ENCODE measurements at regions of chr4 and their contacts with region 1.

Region 1: DNA sequence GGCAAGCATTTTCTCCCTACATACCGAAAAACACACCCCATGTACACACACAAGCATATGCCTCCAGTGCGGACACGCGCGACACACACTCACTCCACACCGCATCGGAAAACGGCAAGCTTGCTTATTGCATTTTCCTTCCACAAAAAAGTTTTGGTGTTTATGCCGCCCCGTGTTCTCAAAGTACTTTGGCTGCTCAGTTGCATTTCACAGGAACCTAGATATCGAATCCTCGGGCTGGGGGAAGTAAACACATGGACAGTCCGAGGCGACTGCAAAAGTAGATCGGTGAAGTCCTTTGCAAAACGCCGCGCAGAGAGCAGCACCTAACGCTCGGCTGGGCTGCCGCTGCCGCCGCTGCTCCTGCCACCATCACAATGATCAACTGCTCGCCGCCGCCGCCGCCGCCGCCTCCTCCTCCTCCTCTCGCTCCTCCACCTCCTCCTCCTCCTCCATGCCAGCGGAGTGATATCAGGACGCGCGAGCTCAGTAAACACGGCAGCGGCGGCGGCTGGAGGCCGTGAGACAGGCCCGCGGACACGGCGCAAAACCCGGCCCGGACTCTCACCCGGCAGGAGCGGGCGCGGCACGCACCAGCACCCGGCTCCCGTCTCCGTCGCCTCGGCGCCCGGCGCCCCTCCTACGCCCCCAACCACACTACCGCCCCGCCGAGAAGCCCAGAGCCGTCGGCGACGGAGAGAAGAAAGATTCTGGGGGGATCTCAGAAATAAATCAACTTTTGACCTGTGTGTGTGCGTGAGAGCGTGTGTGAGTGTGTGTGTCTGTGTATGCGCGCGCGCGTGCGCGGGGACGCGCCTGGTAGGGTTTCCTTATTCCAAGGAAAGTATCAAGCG is at the start of gene MAML3:
- DNase-seq: peak; percentile 91
- H3K4me3 ChIP-seq: peak within 1 kb of the TSS; percentile 70
- H3K27ac ChIP-seq: peak within 1 kb of the TSS; percentile 70
- H3K27me3 ChIP-seq: no peaks in the 10 kb centered on the region
- CTCF ChIP-seq: no peak
- polyA plus RNA-seq, gene MAML3: 3.5 and 4.1 TPM in 2 replicates

Region 2: DNA sequence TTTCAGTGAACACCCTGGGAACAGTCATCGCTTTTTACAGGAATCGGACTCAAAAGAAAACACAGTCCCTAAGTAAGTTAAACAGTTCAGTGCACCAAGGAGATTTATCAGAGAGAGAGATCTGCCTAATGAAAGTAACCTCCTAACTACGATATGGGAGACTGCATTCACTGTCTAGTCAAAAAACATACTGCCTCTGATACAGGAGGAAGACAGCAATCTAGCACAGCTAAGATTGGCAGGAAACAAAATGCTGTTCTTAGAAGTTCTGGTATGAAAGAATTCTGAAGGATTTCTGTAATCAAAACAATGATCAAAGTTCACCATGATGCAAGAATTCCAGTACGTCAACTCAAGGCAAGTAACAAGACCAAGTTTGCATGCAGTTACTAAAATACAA is 92.8 kb before region 1 on chr4:
- CTCF ChIA-PET with region 1: no interaction called
- POLR2A ChIA-PET with region 1: interaction called, 14 read pairs
- DNase-seq: no peak
- H3K4me3 ChIP-seq: no peak overlapping the region
- H3K27ac ChIP-seq: peak overlapping the region; percentile 22
- H3K27me3 ChIP-seq: no peaks in the 10 kb centered on the region
- CTCF ChIP-seq: no peak

Region 3: DNA sequence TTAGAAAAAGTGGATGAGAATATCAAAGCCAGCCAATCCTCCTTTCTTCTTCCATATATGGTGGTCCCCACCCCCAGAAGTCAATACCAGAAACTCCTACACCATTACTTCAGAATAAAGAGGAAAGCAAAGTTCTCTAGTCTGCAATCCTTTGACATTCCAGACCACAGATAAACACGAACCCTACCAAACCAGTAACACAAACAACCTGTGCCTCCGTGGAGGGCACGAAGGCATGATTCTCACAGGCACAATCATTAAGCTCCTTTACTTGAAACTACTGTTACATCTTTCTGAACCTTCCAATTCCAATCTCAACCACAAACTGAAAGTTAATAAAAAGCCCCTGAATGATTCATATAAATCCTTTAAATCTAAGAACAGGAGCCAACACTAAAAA is 16.3 kb before region 1 on chr4:
- CTCF ChIA-PET with region 1: no interaction called
- POLR2A ChIA-PET with region 1: interaction called, 10 read pairs
- DNase-seq: no peak
- H3K4me3 ChIP-seq: peak overlapping the region; percentile 39
- H3K27ac ChIP-seq: peak overlapping the region; percentile 77
- H3K27me3 ChIP-seq: no peaks in the 10 kb centered on the region
- CTCF ChIP-seq: no peak

Region 4: DNA sequence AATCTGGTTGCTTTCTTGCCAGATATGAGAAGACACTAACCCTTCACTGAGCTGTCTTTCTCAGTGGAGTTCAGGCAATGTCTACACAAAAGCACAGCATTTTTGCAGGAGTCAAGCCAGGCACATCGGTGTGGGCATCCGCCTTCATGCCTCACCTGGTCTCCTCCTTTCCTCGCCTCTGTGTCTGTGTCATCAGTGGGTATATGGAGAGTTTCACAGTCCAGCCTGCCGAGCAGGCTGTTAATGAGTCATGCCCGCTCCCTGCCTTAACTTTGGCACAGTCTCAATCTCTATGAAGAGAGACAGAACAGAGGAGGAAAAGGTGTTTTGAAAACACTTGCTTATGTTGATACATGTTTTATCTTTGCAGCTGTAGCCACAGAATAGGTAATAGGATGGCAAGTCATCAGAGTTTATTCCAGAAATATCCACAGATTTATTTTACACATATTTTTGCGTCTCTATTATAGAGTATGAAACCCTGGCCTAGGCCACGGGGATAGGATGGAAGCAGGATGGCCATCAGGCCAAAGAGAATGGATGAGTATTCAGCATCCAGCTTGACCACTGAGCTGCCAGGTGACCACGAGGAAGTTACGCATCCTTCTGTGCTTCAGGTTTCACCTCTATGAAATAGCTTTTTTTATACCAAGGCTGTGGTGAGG is 32.8 kb after region 1 on chr4:
- CTCF ChIA-PET with region 1: no interaction called
- POLR2A ChIA-PET with region 1: no interaction called
- DNase-seq: peak; percentile 10
- H3K4me3 ChIP-seq: no peak overlapping the region
- H3K27ac ChIP-seq: no peak overlapping the region
- H3K27me3 ChIP-seq: no peaks in the 10 kb centered on the region
- CTCF ChIP-seq: no peak

Measured in AG04450 (cell line).